AG04450 (cell line): ENCODE measurements at regions of chr7 and their contacts with region 1.

Region 1: DNA sequence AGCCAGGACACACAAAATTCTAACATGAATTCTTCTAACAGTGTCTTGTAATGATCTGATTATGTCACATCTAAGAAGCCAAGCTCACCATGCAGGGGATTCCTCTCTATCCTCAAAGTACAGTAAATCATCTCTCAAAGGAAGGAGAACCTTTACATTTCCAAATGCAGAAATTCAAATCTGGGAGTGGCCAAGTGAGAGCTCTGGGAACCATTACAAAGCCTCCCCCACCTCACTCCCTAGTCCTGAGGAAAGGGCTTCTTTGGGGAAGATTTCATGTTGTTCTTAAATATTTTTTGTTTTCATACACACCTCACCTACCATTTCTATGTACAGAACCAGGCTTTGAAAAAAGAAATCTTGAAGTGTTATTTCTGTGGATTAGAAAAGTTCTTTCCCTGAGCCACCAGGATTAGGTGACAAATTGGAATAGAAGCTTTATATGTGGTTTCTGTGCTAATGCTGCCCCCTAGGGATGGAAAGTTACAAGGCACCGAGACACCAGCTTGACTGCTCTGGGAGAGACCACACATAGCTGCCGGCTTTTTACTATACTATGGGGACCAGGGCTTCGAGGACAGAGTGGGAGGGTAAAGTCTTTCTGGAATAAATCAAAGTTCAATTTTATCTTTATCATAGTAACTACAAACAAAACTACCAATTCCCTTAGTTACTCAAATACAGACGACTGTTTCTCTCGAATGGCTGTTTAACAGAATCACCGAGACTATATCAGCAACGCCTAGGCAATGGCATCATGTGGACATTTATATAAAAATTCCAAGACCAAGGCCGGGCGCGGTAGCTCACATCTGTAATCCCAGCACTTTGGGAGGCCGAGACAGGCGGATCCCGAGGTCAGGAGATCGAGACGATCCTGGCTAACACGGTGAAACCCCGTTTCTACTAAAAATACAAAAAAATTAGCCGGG is 116.1 kb downstream of the RNF216 start:
- DNase-seq: peak; percentile 44
- H3K4me3 ChIP-seq: no peak overlapping the region
- H3K27ac ChIP-seq: no peak overlapping the region
- H3K27me3 ChIP-seq: no peaks in the 10 kb centered on the region
- CTCF ChIP-seq: peak; percentile 86

Region 2: DNA sequence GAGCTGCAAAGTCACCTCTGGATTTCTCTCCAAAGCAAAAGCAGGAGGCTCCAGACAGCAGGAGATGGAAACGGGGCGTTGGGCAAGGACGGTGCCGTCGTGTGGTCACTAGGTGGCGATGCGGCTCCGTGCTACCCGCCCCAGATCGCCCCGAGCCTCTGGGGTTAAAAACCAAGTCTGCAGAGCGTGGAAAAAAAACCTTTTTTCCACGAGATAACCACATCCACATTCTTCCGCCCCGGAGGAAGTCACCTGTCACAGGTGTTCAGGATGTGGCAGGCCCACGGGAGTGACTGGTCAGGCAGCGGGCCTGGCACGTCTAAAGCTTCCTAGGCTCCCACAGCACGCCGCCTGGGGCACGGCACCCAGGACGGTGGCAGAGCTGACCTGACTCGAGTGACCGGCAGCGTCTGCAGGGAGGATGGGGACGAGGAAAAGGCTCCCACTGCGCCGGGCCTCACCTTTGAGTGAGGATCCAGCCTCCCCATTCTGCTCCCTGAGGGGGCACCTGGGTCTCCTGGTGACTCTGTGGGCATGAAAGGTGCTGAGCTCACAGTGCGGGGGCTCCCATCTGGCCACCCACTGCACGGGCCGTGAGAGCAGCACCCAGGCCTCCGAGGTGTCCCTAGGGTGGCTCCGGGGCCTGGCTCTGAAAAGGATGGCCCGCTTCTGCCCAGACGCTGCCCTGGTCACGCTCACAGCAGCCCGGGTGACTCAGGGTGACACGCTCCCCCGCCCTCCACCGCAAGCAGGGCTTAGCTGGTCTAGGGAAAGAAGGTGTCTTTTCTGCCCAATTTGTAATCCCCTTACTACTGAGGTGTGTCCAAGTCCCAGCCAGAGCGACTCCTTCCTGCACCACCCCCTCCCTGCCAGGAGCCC is 170.4 kb before region 1 on chr7:
- CTCF ChIA-PET with region 1: interaction called, 50 read pairs
- POLR2A ChIA-PET with region 1: no interaction called
- DNase-seq: no peak
- H3K4me3 ChIP-seq: no peak overlapping the region
- H3K27ac ChIP-seq: peak overlapping the region; percentile 31
- H3K27me3 ChIP-seq: no peaks in the 10 kb centered on the region
- CTCF ChIP-seq: peak; percentile 98

Region 3: GRCh38 chr7:5589819-5590595 is 75.4 kb before region 1 on chr7:
- CTCF ChIA-PET with region 1: no interaction called
- POLR2A ChIA-PET with region 1: interaction called, 10 read pairs
- DNase-seq: no peak
- H3K4me3 ChIP-seq: no peak overlapping the region
- H3K27ac ChIP-seq: no peak overlapping the region
- H3K27me3 ChIP-seq: peaks cover 4% of the 10 kb centered on the region
- CTCF ChIP-seq: no peak

Region 4: DNA sequence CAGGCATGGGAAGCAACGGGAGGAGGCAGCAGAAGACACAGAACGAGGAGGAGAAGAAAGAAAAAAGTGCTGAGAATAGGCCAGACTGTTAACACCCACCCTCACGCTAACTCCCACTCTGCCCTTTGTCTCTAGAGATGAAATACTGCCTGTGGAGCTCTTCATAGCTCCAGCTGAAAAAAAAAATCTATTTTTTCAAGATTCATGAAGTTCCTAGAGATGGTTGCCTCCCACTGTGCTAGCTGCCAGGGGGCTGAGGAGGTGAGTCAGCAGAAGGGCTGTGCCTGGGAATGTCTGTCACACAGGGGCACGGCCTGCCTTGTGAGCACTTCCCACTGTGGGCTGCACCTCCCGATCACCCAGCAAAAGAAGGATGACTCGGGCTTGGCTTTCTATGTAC is 28.4 kb before region 1 on chr7:
- CTCF ChIA-PET with region 1: interaction called, 14 read pairs
- POLR2A ChIA-PET with region 1: interaction called, 5 read pairs
- DNase-seq: peak; percentile 61
- H3K4me3 ChIP-seq: no peak overlapping the region
- H3K27ac ChIP-seq: peak overlapping the region; percentile 49
- H3K27me3 ChIP-seq: no peaks in the 10 kb centered on the region
- CTCF ChIP-seq: no peak

Region 5: DNA sequence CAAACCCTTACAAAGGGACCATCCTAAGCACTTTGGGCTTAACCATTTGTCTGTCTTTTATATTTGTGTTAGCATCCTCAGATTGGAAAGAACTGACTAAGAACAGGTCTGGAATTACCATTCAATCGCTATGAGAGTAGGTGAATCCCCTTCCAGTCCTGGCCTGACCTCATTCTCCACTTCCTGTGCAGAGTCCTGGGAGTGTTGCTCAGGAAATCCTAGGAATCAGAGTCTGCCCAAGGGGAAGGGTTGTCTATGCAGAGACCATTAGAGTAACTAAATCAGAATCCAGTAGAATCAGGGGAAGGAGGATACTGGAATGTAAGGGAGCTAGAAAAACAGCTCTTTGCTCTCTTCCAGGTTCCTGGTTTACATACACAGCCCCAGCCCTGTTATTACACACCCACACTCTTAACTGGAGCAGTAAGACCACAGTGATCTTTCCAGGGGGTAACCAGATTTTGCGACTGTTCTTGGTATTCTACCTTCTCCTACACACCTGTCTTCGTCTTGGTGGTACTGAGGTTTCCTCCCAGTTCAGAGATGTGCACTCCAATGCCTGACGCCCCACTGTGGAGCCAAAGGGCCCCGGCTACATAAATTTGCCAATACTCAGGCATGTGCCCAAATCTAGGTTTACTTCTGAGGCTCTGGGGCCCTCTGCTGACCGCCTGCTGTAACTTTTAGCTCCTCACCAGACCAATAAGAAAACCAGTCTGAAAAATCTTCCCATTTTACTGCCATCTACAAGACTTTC is 12.4 kb after region 1 on chr7:
- CTCF ChIA-PET with region 1: interaction called, 45 read pairs
- POLR2A ChIA-PET with region 1: no interaction called
- DNase-seq: peak; percentile 47
- H3K4me3 ChIP-seq: no peak overlapping the region
- H3K27ac ChIP-seq: peak overlapping the region; percentile 2
- H3K27me3 ChIP-seq: no peaks in the 10 kb centered on the region
- CTCF ChIP-seq: peak; percentile 89

Region 6: GRCh38 chr7:5694912-5695726 is 29.8 kb after region 1 on chr7:
- CTCF ChIA-PET with region 1: interaction called, 12 read pairs
- POLR2A ChIA-PET with region 1: interaction called, 4 read pairs
- DNase-seq: peak; percentile 80
- H3K4me3 ChIP-seq: peak overlapping the region; percentile 45
- H3K27ac ChIP-seq: peak overlapping the region; percentile 99
- H3K27me3 ChIP-seq: no peaks in the 10 kb centered on the region
- CTCF ChIP-seq: no peak

Region 7: GRCh38 chr7:5750026-5750653 is 84.8 kb after region 1 on chr7:
- CTCF ChIA-PET with region 1: interaction called, 12 read pairs
- POLR2A ChIA-PET with region 1: no interaction called
- DNase-seq: no peak
- H3K4me3 ChIP-seq: no peak overlapping the region
- H3K27ac ChIP-seq: no peak overlapping the region
- H3K27me3 ChIP-seq: no peaks in the 10 kb centered on the region
- CTCF ChIP-seq: no peak

Region 8: DNA sequence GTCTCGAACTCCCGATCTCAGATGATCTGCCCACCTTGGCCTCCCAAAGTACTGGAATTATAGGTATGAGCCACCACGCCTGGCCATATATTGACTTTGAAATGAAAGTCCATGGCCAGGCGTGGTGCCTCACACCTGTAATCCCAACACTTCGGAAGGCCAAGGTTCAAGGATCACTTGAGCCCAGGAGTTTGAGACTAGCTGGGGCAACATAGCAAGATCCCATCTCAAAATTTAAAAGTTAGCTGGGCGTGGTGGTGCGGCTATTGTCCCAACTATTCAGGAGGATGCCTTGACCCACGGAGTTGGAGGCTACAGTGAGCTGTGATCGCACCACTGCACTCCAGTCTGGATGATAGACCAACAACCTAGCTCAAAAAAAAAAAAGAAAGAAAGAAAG is 227.1 kb after region 1 on chr7:
- CTCF ChIA-PET with region 1: no interaction called
- POLR2A ChIA-PET with region 1: no interaction called
- DNase-seq: no peak
- H3K4me3 ChIP-seq: no peak overlapping the region
- H3K27ac ChIP-seq: no peak overlapping the region
- H3K27me3 ChIP-seq: no peaks in the 10 kb centered on the region
- CTCF ChIP-seq: no peak

Region 9: DNA sequence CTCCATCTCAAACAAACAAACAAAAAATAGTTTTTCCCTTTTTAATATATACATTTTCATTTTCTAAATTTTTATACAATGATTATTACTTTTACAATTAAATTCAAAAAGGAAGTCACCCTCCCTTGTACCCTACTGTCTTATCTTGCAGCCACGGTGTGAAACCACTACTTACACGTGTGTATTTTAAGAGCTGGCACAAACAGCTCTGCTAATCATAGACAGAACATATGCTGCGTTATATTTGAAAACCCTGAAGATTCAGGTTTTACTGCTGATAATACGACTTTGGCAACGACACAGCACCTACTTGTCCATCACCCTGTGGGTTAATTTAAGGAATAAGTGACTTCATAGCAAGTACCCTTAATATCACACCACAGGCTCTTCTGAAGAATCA is 366.8 kb after region 1 on chr7:
- CTCF ChIA-PET with region 1: no interaction called
- POLR2A ChIA-PET with region 1: no interaction called
- DNase-seq: no peak
- H3K4me3 ChIP-seq: no peak overlapping the region
- H3K27ac ChIP-seq: no peak overlapping the region
- H3K27me3 ChIP-seq: no peaks in the 10 kb centered on the region
- CTCF ChIP-seq: no peak